ENCODE measurements at regions of chr3 and their contacts with region 1.

Region 1: DNA sequence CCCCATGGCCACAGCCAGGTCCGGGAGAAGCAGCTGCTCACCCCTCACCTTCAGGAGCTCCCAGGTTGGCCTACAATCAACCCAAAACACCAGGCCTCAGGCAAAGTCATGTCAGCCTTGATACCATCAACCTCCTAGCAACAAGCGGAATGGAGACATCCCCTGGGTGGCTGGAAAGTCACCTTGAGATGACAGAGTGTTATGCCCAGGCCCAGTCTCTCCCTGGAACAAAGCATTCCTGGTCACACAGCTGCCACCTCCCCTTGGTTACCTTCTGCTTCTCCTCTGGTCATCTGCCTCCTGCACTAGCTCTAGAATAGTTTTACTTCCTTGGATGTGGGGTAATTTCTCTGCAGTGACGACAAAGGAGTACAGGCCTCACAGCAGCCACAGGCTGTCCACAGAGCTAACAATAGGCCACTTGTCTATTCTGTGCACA is 114.9 kb downstream of the RFTN1 start:
- DNase-seq: no peak
- ATAC-seq: no peak
- H3K4me3 Mint-ChIP-seq: no peak overlapping the region
- H3K27ac Mint-ChIP-seq: no peak overlapping the region
- H3K4me1 Mint-ChIP-seq: peaks cover 32% of the 10 kb centered on the region
- H3K27me3 Mint-ChIP-seq: no peaks in the 10 kb centered on the region

Region 2: GRCh38 chr3:16369276-16369675 is 29.3 kb before region 1 on chr3:
- CTCF ChIA-PET with region 1: no interaction called
- POLR2A ChIA-PET with region 1: no interaction called
- intact Hi-C with region 1: no loop called
- DNase-seq: peak; percentile 29
- ATAC-seq: peak; percentile 46
- H3K4me3 Mint-ChIP-seq: no peak overlapping the region
- H3K27ac Mint-ChIP-seq: peak overlapping the region; percentile 76
- H3K4me1 Mint-ChIP-seq: peaks cover 58% of the 10 kb centered on the region
- H3K27me3 Mint-ChIP-seq: no peaks in the 10 kb centered on the region

Region 3: DNA sequence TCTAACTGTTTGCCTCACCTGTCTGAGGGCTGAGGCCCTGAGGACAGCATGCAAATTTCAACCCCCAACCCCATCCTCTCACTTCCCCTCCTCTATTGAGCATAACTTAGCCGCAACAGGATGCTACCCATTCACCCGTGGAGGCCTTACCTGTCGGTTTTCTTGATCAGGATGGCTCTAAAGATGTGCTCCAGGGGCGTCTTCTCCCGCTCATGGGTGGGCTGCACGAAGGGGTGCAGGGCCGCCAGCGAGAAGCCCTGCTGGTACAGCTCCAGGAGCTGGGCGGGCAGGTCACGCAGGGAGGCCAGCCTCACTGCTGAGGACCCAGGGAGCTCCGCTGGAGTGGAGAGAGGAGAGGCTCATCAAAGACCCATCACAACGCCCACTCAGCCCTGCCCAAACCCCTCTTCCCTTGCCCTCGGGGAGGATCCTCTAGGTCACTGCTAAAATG is 35.1 kb after region 1 on chr3:
- CTCF ChIA-PET with region 1: no interaction called
- POLR2A ChIA-PET with region 1: no interaction called
- intact Hi-C with region 1: loop called in 1 of 2 experiments (anchors 1 kb)
- DNase-seq: no peak
- ATAC-seq: no peak
- H3K4me3 Mint-ChIP-seq: no peak overlapping the region
- H3K27ac Mint-ChIP-seq: no peak overlapping the region
- H3K4me1 Mint-ChIP-seq: peaks cover 18% of the 10 kb centered on the region
- H3K27me3 Mint-ChIP-seq: no peaks in the 10 kb centered on the region